Stomach (tissue), 19 donors: ENCODE measurements at regions of chr7 and their contacts with region 1.

Region 1: GRCh38 chr7:127598318-127598717 is 4.8 kb downstream of the FSCN3 start:
- DNase-seq: no peak
- H3K4me3 ChIP-seq: no peak overlapping the region
- H3K27ac ChIP-seq: no peak overlapping the region
- H3K4me1 ChIP-seq: no peaks in the 10 kb centered on the region
- H3K27me3 ChIP-seq: no peaks in the 10 kb centered on the region
- CTCF ChIP-seq: no peak
- EP300 ChIP-seq: no peak
- POLR2A ChIP-seq: no peak

Region 2: GRCh38 chr7:127375631-127376030 is 222.7 kb before region 1 on chr7:
- intact Hi-C with region 1: no loop called
- DNase-seq: no peak
- H3K4me3 ChIP-seq: no peak overlapping the region
- H3K27ac ChIP-seq: no peak overlapping the region
- H3K4me1 ChIP-seq: peaks cover 0 to 40% (median 23%) of the 10 kb centered on the region in 4 donors
- H3K27me3 ChIP-seq: no peaks in the 10 kb centered on the region
- CTCF ChIP-seq: no peak
- EP300 ChIP-seq: no peak
- POLR2A ChIP-seq: no peak

Region 3: GRCh38 chr7:127437852-127438251 is 160.5 kb before region 1 on chr7:
- intact Hi-C with region 1: no loop called
- DNase-seq: no peak
- H3K4me3 ChIP-seq: no peak overlapping the region
- H3K27ac ChIP-seq: no peak overlapping the region
- H3K4me1 ChIP-seq: no peaks in the 10 kb centered on the region
- H3K27me3 ChIP-seq: no peaks in the 10 kb centered on the region
- CTCF ChIP-seq: no peak
- EP300 ChIP-seq: no peak
- POLR2A ChIP-seq: no peak

Region 4: DNA sequence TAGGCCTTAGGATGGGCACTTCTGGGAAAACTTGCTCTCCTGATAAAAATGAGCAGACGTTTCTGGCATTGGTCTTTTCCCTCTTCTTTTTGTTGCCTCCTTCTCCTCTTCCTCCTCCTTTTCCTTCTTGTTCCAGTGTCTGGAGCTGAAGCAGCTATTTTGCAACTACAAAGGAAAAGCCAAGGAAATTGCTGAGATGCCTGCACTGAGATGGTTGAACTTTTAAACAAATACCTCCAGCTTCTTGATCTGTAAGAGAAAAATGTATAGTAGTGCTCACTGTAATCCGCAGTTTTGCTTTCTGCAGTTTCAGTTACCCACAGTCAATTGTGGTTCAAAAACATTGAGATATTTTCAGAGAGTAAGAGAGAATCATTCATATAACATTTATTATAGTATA is 46.2 kb after region 1 on chr7:
- intact Hi-C with region 1: loop called (anchors 10 kb)
- DNase-seq: no peak
- H3K4me3 ChIP-seq: no peak overlapping the region
- H3K27ac ChIP-seq: no peak overlapping the region
- H3K4me1 ChIP-seq: no peaks in the 10 kb centered on the region
- H3K27me3 ChIP-seq: no peaks in the 10 kb centered on the region
- CTCF ChIP-seq: no peak
- EP300 ChIP-seq: no peak
- POLR2A ChIP-seq: no peak